Ascending aorta (tissue), 2 donors: ENCODE measurements at regions of chr3 and their contacts with region 1.

Region 1: GRCh38 chr3:195909644-195910508 is 1.5 kb upstream of the TNK2 start:
- DNase-seq: peak in 1 of 2 donors; percentile 90
- H3K4me3 ChIP-seq: peak overlapping the region; percentile 76 to 84
- H3K27ac ChIP-seq: peak overlapping the region; percentile 56 to 70
- H3K4me1 ChIP-seq: peaks cover 6 to 21% of the 10 kb centered on the region in 2 donors
- H3K27me3 ChIP-seq: no peaks in the 10 kb centered on the region
- CTCF ChIP-seq: no peak

Region 2: DNA sequence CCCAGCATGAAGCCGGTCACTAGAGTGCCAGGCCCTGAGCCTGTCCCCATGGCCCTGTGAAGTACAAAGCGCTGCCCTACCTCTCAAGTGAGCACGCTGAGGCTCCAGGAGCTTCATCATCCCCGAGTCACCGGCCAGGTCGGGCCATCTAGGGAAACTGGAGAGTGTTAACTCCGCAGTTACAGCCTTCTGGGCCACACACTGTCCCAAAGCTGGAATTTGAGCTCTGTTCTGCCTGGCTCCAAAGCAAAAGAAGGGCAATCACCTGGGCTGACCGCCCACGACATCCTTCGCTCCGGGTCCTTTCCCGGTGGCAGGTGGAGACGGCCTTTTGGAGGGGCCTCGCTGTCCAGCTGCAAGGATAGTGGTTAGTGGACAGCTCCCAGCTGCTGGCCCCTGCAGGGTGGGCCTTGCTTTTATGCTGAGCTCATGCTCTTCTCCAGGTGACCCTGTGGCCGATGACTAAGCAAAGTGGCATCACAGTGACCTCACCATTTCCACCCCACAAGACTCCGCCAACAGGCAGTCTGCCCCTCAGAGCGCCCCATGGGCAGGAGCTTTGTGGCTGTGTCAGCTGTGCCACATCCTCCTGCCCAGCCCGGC is 94.6 kb before region 1 on chr3:
- intact Hi-C with region 1: no loop called
- DNase-seq: no peak
- H3K4me3 ChIP-seq: no peak overlapping the region
- H3K27ac ChIP-seq: no peak overlapping the region
- H3K4me1 ChIP-seq: no peaks in the 10 kb centered on the region
- H3K27me3 ChIP-seq: no peaks in the 10 kb centered on the region
- CTCF ChIP-seq: no peak

Region 3: GRCh38 chr3:195863121-195864006 is 46.5 kb before region 1 on chr3:
- intact Hi-C with region 1: loop called (anchors 1 kb)
- DNase-seq: peak; percentile 74 to 97
- H3K4me3 ChIP-seq: peak overlapping the region in 1 of 2 donors; percentile 39
- H3K27ac ChIP-seq: peak overlapping the region; percentile 88 to 95
- H3K4me1 ChIP-seq: peaks cover 6 to 9% of the 10 kb centered on the region in 2 donors
- H3K27me3 ChIP-seq: no peaks in the 10 kb centered on the region
- CTCF ChIP-seq: peak; percentile 96 to 98 (median 97)

Region 4: DNA sequence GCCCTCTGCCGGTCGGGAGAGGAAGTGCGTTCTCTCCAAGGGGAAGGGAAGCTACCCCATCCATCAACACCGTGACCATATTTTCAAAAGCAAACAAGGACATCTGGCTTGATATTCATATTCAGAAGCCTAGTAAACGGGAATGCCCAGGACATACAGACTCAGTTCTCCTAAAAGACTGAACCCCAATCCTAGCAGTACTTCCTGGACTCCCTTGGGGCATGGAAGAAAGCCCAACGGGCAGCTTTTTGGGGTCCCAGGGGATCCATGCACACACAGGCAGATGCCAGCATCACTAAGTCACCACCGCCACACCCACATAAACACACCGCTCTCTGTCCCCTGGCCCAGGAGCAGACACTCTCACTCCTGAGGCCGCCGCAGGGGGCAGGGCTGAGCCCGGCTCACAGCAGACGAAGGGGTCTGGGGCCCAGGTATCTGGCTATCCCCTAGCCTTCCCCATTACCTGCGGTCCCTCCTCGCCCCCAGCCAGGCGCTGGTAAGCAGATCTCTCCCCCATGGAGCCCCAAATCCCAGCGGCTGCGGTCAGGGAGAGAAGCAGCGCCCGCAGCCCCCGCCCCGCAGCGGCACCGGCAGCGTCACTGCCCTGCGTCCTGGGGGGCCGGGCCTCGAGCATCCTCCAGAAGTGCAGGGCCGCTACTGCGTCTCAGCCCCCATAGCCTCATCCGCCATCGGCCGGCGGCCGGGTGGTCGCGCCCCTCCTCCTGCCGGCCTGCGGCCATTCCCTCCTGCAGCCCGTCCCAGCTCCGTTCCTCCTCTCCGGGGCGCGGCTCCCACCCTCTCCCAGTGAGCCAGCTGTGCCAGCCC is 14.9 kb before region 1 on chr3:
- intact Hi-C with region 1: loop called (anchors 1 kb)
- DNase-seq: peak in 1 of 2 donors; percentile 58
- H3K4me3 ChIP-seq: peak overlapping the region; percentile 77 to 90
- H3K27ac ChIP-seq: peak overlapping the region; percentile 94 to 98
- H3K4me1 ChIP-seq: peaks cover 20 to 55% of the 10 kb centered on the region in 2 donors
- H3K27me3 ChIP-seq: no peaks in the 10 kb centered on the region
- CTCF ChIP-seq: peak; percentile 87 to 97 (median 94)